ENCODE measurements at regions of chr2 and their contacts with region 1.

Region 1: DNA sequence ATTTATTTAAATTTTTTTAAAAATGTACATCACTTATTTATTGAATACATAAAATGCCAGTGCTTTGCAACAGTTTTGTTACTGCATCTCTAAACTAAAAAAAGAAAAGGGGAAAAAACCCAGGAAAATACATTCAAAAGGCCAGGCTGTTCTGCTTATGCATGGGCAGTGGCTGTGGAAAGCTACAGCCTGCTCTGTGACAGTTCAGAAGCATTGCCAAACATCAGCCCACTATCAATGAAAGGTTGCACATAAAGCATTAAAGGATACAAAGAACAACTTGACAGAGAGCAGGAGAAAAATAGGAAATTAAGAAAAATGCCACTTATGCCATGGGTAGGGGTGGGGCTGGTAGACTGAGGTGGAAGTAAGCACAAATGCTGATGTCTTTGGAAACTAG is 128.2 kb downstream of the FIGN start:
- DNase-seq: no peak
- H3K4me3 ChIP-seq: no peak overlapping the region
- H3K27ac ChIP-seq: no peak overlapping the region
- H3K4me1 ChIP-seq: no peaks in the 10 kb centered on the region
- H3K27me3 ChIP-seq: no peaks in the 10 kb centered on the region
- CTCF ChIP-seq: no peak
- POLR2A ChIP-seq: no peak

Region 2: GRCh38 chr2:163573651-163574050 is 34.0 kb before region 1 on chr2:
- intact Hi-C with region 1: loop called (anchors 2 kb)
- DNase-seq: no peak
- H3K4me3 ChIP-seq: no peak overlapping the region
- H3K27ac ChIP-seq: no peak overlapping the region
- H3K4me1 ChIP-seq: no peaks in the 10 kb centered on the region
- H3K27me3 ChIP-seq: no peaks in the 10 kb centered on the region
- CTCF ChIP-seq: no peak
- POLR2A ChIP-seq: no peak

Region 3: GRCh38 chr2:163644238-163644637 is 36.6 kb after region 1 on chr2:
- intact Hi-C with region 1: no loop called
- DNase-seq: no peak
- H3K4me3 ChIP-seq: no peak overlapping the region
- H3K27ac ChIP-seq: no peak overlapping the region
- H3K4me1 ChIP-seq: no peaks in the 10 kb centered on the region
- H3K27me3 ChIP-seq: no peaks in the 10 kb centered on the region
- CTCF ChIP-seq: no peak
- POLR2A ChIP-seq: no peak

Measured in breast epithelium (tissue), 4 donors.